Left ventricle myocardium superior (tissue), 1 donor: ENCODE measurements at regions of chr1 and their contacts with region 1.

Region 1: DNA sequence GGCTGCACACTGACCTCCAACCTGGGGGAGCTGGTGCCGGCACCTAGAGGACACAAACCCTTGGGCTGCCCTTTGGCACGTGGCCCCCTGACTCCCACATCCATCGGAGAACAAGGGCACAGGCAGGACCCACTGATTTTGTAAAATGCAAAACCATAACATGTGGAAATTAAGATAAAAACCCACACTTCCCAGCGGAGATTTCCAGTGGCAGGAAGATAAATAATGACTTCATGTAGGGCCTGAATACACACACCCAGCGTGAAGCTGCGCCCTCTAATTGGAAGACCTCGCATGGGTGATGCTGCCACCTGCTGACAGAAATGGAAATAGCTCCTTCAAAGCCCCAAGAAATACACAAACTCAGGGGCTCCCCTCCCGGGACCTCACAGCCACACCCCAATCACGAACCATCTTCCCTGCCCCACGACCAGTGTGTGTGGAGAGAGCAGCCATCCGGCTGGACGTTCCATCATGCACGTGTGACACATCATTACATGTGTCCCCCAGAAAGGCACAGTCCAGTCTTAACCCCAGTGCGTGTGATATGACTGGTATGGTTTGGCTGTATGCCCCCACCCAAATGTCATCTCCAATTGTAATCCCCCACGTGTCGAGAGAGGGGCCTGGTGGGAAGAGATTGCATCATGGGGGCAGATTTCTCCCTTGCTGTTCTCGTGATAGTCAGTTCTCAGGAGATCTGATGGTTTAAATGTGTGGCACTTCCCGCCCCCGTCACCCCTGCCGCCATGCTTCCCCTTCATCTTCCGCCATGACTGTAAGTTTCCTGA is 5.7 kb upstream of the TPRG1L start:
- DNase-seq: peak; percentile 63
- ATAC-seq: peak; percentile 76

Region 2: GRCh38 chr1:3491291-3492246 is 127.5 kb before region 1 on chr1:
- intact Hi-C with region 1: loop called (anchors 5 kb)
- DNase-seq: peak; percentile 87
- ATAC-seq: peak; percentile 85

Region 3: GRCh38 chr1:3586932-3587678 is 32.0 kb before region 1 on chr1:
- intact Hi-C with region 1: no loop called
- DNase-seq: no peak
- ATAC-seq: no peak